ENCODE measurements at regions of chr2 and their contacts with region 1.

Region 1: GRCh38 chr2:119311356-119311755 is 55.3 kb downstream of the C2orf76 start:
- DNase-seq: no peak
- ATAC-seq: peak in 1 of 2 donors; percentile 44
- H3K4me3 ChIP-seq: no peak overlapping the region
- H3K27ac ChIP-seq: no peak overlapping the region
- H3K4me1 ChIP-seq: no peaks in the 10 kb centered on the region
- H3K27me3 ChIP-seq: no peaks in the 10 kb centered on the region

Region 2: DNA sequence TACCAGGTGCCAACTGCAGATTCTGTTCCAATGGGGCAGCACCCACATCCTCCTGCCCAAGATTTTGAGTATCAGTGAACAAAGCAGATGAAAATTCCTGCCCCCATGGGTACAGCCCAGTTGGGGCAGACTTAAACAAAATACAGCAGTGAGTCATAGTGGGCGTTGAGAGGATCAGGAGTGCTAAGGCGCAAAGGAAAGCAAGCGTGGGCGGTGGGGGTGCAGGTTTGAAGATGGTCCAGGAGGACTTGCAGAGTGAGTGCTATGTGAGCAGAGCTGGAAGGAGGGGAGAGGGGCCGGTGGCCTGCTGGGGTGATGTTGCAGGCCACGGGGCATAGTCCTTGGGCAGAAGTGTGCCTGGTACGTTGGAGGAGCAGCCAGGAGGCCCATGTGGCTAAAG is 63.0 kb before region 1 on chr2:
- intact Hi-C with region 1: no loop called
- DNase-seq: no peak
- ATAC-seq: no peak
- H3K4me3 ChIP-seq: no peak overlapping the region
- H3K27ac ChIP-seq: no peak overlapping the region
- H3K4me1 ChIP-seq: no peaks in the 10 kb centered on the region
- H3K27me3 ChIP-seq: no peaks in the 10 kb centered on the region

Region 3: GRCh38 chr2:119366649-119367471 is 55.5 kb after region 1 on chr2 and contains the starts of genes C2orf76 and DBI:
- intact Hi-C with region 1: loop called in 1 of 4 experiments (anchors 10 kb)
- DNase-seq: peak; percentile 95 to 98 (median 98)
- ATAC-seq: peak; percentile 98 to 99
- H3K4me3 ChIP-seq: peak within 1 kb of the TSS; percentile 57
- H3K27ac ChIP-seq: peak within 1 kb of the TSS; percentile 84
- H3K4me1 ChIP-seq: peaks cover 3% of the 10 kb centered on the region
- H3K27me3 ChIP-seq: no peaks in the 10 kb centered on the region
- total RNA-seq, gene C2orf76: 11.4 to 13.3 (median 13.0) TPM
- total RNA-seq, gene DBI: 178 to 218 (median 200) TPM

Region 4: GRCh38 chr2:119476301-119477021 is 165.1 kb after region 1 on chr2:
- intact Hi-C with region 1: loop called in 2 of 4 experiments (anchors 10 kb)
- DNase-seq: peak; percentile 53 to 81 (median 69)
- ATAC-seq: peak; percentile 67 to 76
- H3K4me3 ChIP-seq: no peak overlapping the region
- H3K27ac ChIP-seq: no peak overlapping the region
- H3K4me1 ChIP-seq: no peaks in the 10 kb centered on the region
- H3K27me3 ChIP-seq: no peaks in the 10 kb centered on the region